ENCODE measurements at regions of chr6 and their contacts with region 1.

Region 1: DNA sequence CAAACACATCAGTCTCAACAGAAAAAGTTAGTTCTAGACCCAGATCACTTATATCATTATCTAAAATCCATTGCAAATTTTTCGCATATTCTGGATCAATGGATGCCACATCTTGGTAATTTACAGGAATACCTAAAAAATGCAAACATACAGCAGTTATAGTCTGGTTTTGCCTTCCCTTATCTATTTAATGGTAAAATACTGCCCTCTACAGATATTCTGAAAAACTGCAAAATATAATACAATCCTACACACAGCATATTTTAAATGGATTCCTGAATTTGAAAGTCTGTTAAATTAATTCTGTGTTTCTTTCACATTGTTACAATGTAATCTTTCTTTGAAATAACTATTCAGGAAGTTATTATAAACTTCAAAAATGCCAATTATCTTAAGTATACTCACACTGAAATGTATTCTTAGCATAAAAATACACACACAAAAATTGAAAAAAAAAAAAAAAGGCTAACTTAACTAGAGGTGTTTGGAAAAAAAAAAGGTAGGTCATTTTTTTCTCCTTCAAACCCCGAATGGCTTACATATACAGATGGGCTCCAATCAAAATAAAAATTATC is 88.4 kb downstream of the HACE1 start:
- DNase-seq: peak; percentile 13 to 22 (median 14)
- ATAC-seq: peak; percentile 91
- H3K4me3 ChIP-seq: no peak overlapping the region
- H3K27ac ChIP-seq: no peak overlapping the region
- H3K4me1 ChIP-seq: no peaks in the 10 kb centered on the region
- H3K27me3 ChIP-seq: no peaks in the 10 kb centered on the region
- CTCF ChIP-seq: peak; percentile 31 to 78 (median 46); a peak in 5 of 6 replicates
- EP300 ChIP-seq: no peak
- POLR2A ChIP-seq: no peak
- RAD21 ChIP-seq: peak; percentile 83 to 86

Region 2: DNA sequence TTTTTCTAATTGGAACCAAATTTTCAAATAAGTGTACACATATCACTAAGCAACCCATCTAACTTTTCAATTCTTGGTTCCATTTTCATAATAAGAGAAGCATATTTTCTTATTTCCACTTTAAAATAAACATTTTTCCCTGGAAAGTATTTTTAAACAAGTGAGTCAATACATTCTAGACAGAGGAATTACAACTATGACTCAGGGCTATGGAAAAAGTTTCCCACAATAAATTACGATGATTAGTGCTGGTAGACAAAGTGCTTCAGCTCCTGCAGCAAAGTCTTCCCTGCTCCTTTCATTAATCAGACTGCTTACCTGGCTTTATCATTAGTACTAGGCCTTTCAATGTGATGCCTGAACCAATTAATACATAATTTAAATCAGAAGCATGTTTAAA is 234.2 kb before region 1 on chr6:
- CTCF ChIA-PET with region 1: no interaction called
- POLR2A ChIA-PET with region 1: no interaction called
- in situ Hi-C with region 1: no loop called
- intact Hi-C with region 1: no loop called
- DNase-seq: no peak
- ATAC-seq: no peak
- H3K4me3 ChIP-seq: no peak overlapping the region
- H3K27ac ChIP-seq: no peak overlapping the region
- H3K4me1 ChIP-seq: no peaks in the 10 kb centered on the region
- H3K27me3 ChIP-seq: no peaks in the 10 kb centered on the region; a peak in 1 of 5 replicates
- CTCF ChIP-seq: no peak
- EP300 ChIP-seq: no peak
- POLR2A ChIP-seq: no peak
- RAD21 ChIP-seq: no peak

Region 3: GRCh38 chr6:104639668-104640067 is 131.7 kb before region 1 on chr6:
- CTCF ChIA-PET with region 1: no interaction called
- POLR2A ChIA-PET with region 1: no interaction called
- in situ Hi-C with region 1: no loop called
- intact Hi-C with region 1: no loop called
- DNase-seq: no peak
- ATAC-seq: no peak
- H3K4me3 ChIP-seq: no peak overlapping the region
- H3K27ac ChIP-seq: no peak overlapping the region
- H3K4me1 ChIP-seq: no peaks in the 10 kb centered on the region; a peak in 1 of 5 replicates
- H3K27me3 ChIP-seq: no peaks in the 10 kb centered on the region; a peak in 1 of 5 replicates
- CTCF ChIP-seq: no peak
- EP300 ChIP-seq: no peak
- POLR2A ChIP-seq: no peak
- RAD21 ChIP-seq: no peak

Region 4: DNA sequence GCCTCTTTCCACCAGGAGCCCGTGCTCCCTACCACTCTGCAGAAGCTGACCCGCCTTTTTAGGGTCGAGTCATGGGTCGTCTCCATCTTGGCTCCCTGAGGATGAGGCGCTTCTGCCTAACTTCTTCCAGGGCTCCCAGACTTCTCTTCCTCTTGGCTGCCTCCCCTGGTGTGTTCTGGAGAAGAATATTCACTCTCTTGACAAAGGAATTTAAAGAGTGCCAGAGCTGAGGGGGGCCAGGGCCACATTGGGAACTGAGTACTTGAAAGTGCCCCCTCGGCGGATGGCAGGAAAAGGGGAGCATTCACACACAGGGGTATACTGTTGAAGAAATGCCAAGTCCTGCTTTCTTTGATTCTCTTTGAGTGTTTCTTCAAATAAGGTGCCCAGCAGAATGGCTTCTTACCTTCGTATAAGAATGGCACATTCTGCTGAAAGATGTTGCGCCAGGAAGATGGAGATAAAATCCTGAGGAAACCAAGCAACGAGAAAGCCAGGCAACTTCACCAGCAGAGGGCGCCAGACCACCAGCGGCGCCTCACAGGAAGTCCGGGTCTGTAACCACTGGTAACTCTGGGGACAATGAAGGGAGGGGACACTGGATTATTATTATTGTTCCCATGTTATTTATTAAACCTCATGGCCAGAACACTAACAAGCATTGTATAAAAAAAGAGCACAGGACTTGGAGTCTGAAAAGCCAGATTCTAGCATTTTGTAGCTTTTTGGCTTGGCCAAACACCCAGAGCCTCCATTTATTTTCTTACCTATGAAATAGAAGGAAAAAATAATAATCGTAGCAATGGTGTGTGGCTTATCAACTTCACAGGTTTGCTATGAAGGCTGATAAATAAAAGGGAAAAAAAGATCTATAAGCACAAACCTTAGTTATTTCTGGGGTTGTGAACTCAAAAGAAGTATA is 88.4 kb before region 1 on chr6:
- CTCF ChIA-PET with region 1: interaction called, 22 read pairs
- POLR2A ChIA-PET with region 1: no interaction called
- in situ Hi-C with region 1: loop called (anchors 5 kb)
- intact Hi-C with region 1: loop called (anchors 1 kb)
- DNase-seq: peak; percentile 82 to 89 (median 82)
- ATAC-seq: peak; percentile 97
- H3K4me3 ChIP-seq: no peak overlapping the region
- H3K27ac ChIP-seq: no peak overlapping the region
- H3K4me1 ChIP-seq: no peaks in the 10 kb centered on the region; a peak in 1 of 5 replicates
- H3K27me3 ChIP-seq: no peaks in the 10 kb centered on the region
- CTCF ChIP-seq: peak; percentile 88 to 96 (median 94)
- EP300 ChIP-seq: no peak
- POLR2A ChIP-seq: no peak
- RAD21 ChIP-seq: peak; percentile 92 to 93

Region 5: DNA sequence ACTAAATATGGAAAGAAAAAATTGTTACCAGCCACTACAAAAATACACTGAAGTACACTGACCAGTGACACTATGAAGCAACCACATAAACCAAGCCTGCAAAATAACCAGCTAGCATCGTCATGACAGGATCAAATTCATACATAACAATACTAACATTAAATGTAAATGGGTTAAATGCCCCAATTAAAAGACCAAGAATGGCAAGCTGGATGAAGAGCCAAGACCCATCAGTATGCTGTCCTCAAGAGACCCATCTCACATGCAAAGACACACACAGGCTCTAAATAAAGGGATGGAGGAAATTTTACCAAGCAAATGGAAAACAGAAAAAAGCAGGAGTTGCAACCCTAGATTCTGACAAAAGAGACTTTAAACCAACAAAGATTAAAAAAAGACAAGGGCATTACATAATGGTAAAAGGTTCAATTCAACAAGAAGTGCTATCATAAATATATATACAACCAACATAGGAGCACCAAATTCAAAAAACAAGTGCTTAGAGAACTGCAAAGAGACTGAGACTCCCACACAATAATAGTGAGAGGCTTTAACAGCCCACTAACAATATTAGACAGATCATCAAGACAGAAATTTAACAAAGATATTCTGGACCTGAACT is 16.4 kb before region 1 on chr6:
- CTCF ChIA-PET with region 1: no interaction called
- POLR2A ChIA-PET with region 1: no interaction called
- in situ Hi-C with region 1: no loop called
- intact Hi-C with region 1: no loop called
- DNase-seq: no peak
- ATAC-seq: no peak
- H3K4me3 ChIP-seq: no peak overlapping the region
- H3K27ac ChIP-seq: no peak overlapping the region
- H3K4me1 ChIP-seq: no peaks in the 10 kb centered on the region
- H3K27me3 ChIP-seq: no peaks in the 10 kb centered on the region
- CTCF ChIP-seq: no peak
- EP300 ChIP-seq: no peak
- POLR2A ChIP-seq: no peak
- RAD21 ChIP-seq: no peak

Measured in K562 (cell line).